PC-3 (cell line): ENCODE measurements at regions of chr13 and their contacts with region 1.

Region 1: DNA sequence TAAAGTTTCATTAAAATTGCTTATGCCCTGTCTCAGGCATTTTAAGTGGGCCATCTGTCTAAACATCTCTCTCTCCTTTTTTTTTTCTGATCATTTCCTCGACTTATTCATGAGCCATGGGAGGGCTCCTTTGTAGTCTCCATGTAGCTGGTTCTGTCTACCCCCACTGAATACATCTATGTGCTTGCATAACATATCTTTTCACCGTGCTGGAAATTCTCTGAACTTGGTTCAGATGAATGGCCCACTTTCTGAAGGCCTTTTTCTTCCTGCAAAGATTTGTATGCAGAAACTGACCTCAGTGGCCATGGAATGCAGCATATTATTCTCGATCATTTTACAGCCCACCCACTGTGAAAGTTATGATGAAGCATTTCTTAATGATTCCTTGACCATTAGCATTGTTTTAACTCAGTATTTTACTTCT is 225.3 kb downstream of the GGACT start:
- DNase-seq: no peak
- ATAC-seq: no peak; the same call in 1 of the 2 replicates
- H3K4me3 ChIP-seq: no peak overlapping the region
- H3K27ac ChIP-seq: no peak overlapping the region
- H3K4me1 ChIP-seq: peaks cover 20% of the 10 kb centered on the region
- H3K27me3 ChIP-seq: no peaks in the 10 kb centered on the region
- CTCF ChIP-seq: no peak

Region 2: GRCh38 chr13:100382785-100383184 is 19.5 kb after region 1 on chr13:
- CTCF ChIA-PET with region 1: no interaction called
- POLR2A ChIA-PET with region 1: no interaction called
- intact Hi-C with region 1: no loop called
- DNase-seq: no peak
- ATAC-seq: no peak
- H3K4me3 ChIP-seq: no peak overlapping the region
- H3K27ac ChIP-seq: no peak overlapping the region
- H3K4me1 ChIP-seq: no peaks in the 10 kb centered on the region
- H3K27me3 ChIP-seq: no peaks in the 10 kb centered on the region
- CTCF ChIP-seq: no peak

Region 3: DNA sequence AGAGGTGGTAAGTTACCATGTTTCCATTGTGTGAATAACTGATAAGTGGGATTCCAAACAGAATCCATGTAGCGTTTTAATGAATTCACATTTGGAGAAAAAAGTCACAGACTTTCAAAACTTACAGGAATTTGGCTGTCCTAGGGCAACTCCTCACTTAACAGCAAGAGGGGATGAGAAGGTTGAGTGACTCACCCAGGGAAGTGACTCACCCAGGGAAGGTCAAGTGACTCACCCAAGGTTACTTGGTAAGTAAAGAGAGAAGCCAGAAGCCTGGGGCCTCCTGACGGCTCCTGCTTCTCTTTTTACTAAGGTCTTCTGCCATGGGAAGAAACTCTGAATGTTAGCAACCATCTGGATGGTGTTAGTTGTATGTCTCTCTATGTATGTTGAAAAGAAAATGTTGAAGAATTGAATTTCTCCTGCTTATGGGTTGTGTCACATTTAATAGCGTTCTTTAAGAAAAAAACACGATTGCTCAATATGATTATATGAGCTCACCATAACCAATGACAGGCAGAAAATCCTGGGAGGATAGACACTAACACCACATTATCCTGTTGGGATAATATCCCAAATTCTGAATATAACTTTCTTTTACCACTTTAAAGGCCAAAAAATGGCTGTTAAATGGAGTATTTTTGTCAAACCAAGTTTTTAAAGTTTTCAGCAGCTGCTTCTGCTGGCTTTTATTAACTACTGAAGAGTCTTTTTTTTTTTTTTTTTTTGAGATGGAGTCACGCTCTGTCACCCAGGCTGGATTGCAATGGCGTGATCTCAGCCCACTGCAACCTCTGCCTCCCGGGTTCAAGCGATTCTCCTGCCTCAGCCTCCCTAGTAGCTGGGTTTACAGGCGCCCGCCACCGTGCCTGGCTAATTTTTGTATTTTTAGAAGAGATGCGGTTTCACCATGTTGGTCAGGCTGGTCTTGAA is 29.7 kb after region 1 on chr13:
- CTCF ChIA-PET with region 1: no interaction called
- POLR2A ChIA-PET with region 1: no interaction called
- intact Hi-C with region 1: loop called (anchors 1 kb)
- DNase-seq: peak; percentile 95
- ATAC-seq: peak; percentile 99
- H3K4me3 ChIP-seq: no peak overlapping the region
- H3K27ac ChIP-seq: peak overlapping the region; percentile 78
- H3K4me1 ChIP-seq: peaks cover 17% of the 10 kb centered on the region
- H3K27me3 ChIP-seq: no peaks in the 10 kb centered on the region
- CTCF ChIP-seq: no peak

Region 4: DNA sequence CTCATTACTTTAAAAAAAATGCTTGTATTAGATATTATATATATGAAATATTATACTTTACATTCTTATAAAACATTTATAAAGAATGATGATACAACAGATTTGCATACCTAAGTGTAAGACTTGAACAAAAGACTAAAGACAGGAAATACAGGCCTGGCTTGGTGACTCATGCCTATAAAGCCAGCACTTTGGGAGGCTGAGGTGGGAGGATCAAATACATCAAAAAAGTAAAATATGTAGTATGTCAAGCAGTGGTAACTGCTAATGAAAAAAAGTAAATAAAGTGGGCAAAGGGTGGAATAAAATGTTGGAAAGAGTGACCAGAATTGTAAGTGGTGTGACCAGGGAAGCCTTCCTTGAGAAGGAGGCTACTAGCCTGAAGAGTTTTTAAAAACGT is 91.6 kb after region 1 on chr13:
- CTCF ChIA-PET with region 1: no interaction called
- POLR2A ChIA-PET with region 1: no interaction called
- intact Hi-C with region 1: loop called (anchors 10 kb)
- DNase-seq: peak; percentile 77
- ATAC-seq: peak; percentile 97
- H3K4me3 ChIP-seq: no peak overlapping the region
- H3K27ac ChIP-seq: no peak overlapping the region
- H3K4me1 ChIP-seq: peaks cover 13% of the 10 kb centered on the region
- H3K27me3 ChIP-seq: no peaks in the 10 kb centered on the region
- CTCF ChIP-seq: no peak

Region 5: GRCh38 chr13:100506154-100506553 is 142.9 kb after region 1 on chr13:
- CTCF ChIA-PET with region 1: no interaction called
- POLR2A ChIA-PET with region 1: no interaction called
- intact Hi-C with region 1: loop called (anchors 2 kb)
- DNase-seq: no peak
- ATAC-seq: no peak
- H3K4me3 ChIP-seq: no peak overlapping the region
- H3K27ac ChIP-seq: no peak overlapping the region
- H3K4me1 ChIP-seq: no peaks in the 10 kb centered on the region
- H3K27me3 ChIP-seq: no peaks in the 10 kb centered on the region
- CTCF ChIP-seq: no peak

Region 6: GRCh38 chr13:101115762-101116171 is 752.5 kb after region 1 on chr13:
- CTCF ChIA-PET with region 1: no interaction called
- POLR2A ChIA-PET with region 1: no interaction called
- intact Hi-C with region 1: no loop called
- DNase-seq: peak; percentile 21
- ATAC-seq: peak; percentile 43; the same call in 1 of the 2 replicates
- H3K4me3 ChIP-seq: no peak overlapping the region
- H3K27ac ChIP-seq: no peak overlapping the region
- H3K4me1 ChIP-seq: peaks cover 11% of the 10 kb centered on the region
- H3K27me3 ChIP-seq: no peaks in the 10 kb centered on the region
- CTCF ChIP-seq: peak; percentile 51; the same call in 1 of the 2 replicates